Right cardiac atrium (tissue), 5 donors: ENCODE measurements at regions of chr7 and their contacts with region 1.

Region 1: DNA sequence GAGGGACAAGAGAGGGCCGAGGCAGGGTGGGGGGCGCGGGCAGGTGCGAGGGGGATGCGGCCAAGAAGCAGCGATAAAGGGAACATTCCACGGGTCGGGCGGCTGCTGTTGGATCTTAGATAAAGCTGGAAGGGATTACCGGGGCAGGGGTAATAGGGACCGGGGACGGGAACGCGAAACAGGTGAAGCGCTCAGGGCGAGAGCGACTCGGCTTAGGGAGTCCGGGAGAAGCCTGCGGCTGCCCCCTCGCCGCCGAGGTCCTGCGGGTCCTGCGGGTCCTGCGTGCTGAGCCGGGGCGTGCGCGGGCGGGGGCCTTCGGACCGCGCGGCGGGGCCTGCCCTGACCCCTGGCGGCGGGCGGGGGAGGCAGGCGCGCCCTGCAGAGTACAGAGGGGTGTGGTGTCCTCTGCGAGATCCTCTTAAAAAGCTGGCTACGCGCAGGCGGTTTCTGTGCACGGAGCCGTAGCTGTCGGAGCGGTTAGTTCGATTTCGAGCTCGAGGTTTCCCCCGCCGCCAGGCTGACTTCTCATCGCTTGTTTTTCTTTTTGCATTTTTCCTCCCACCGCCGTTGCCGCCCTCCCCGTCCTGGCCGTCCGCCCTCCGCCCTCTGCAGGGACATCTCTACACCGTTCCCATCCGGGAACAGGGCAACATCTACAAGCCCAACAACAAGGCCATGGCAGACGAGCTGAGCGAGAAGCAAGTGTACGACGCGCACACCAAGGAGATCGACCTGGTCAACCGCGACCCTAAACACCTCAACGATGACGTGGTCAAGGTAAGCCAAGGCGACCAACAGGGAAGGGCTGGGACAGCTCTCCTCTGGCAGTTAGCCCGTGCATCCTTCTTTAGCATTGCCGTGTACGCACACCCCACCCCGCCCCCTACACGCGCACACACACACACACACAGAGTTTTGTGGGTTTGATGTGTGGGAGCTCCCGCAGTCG is 1.4 kb downstream of the CAV1 start:
- DNase-seq: peak; percentile 84 to 94 (median 93)
- ATAC-seq: peak; percentile 89 to 91
- H3K4me3 ChIP-seq: peak overlapping the region; percentile 76
- H3K27ac ChIP-seq: peak overlapping the region; percentile 95
- H3K4me1 ChIP-seq: peaks cover 6% of the 10 kb centered on the region
- H3K27me3 ChIP-seq: no peaks in the 10 kb centered on the region

Region 2: DNA sequence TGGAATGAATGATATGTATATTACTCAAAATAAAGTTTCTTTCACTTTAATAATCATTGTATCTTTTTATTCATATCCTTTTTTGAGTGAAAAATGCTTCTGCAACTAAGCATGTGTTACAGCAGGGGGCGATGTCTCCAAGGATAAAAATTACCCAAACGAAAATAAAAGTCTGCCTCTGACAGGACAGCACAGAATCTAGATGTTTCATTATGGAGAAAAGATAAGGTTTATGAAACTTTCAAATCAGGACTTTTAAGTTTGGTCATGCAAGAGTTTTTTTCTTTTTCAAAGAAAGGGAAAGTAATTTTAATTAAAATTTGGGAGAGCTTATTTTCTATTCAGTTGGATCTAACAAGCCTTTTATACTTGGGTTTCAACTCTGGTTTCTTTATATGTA is 267.5 kb before region 1 on chr7:
- intact Hi-C with region 1: loop called in 2 of 4 experiments (anchors 5 to 10 kb)
- DNase-seq: no peak
- ATAC-seq: peak; percentile 54 to 59
- H3K4me3 ChIP-seq: no peak overlapping the region
- H3K27ac ChIP-seq: no peak overlapping the region
- H3K4me1 ChIP-seq: no peaks in the 10 kb centered on the region
- H3K27me3 ChIP-seq: no peaks in the 10 kb centered on the region

Region 3: DNA sequence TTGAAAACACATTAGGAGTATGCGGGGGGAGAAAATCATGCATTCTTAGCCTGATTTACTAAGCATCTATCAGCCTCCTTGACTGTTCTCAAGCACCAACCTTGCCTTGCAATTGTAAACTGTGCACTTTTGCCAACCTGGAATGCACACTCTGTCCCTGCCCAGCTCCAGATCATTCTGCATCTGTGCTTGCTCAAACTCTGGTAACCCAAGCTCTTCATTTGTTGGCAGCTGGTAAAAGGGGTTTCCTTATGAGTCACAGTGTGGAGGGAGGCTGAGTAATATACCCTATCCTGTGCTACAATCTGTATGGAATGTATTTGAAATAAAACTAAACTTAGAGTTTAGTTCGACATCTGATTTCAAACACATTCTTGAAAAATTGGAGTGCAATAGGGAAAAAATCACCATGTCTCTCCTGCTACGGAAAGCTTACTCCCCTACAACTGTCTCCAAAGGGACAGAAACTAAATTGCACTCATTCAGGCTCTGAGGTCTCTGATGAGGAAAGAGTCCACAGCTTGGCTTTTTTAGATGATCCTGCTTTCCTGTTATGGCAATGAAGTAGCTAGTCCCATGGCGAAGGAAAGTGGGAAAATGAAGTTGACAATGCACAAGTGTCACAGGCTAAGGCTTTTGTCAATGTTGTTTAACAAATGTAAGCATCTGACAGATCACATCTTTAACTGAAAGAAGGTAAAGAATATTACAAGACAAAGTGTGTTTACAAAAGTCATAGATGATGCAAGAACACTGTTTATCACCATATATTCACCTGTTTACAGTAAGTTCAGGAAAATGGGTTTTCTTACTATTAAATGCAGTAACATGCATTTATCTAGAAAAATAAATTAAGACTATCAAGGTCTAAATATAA is 254.0 kb before region 1 on chr7:
- intact Hi-C with region 1: loop called in 2 of 4 experiments (anchors 10 kb)
- DNase-seq: peak in 2 of 3 donors; percentile 19 to 40
- ATAC-seq: peak; percentile 92 to 97
- H3K4me3 ChIP-seq: no peak overlapping the region
- H3K27ac ChIP-seq: peak overlapping the region; percentile 56
- H3K4me1 ChIP-seq: peaks cover 3% of the 10 kb centered on the region
- H3K27me3 ChIP-seq: no peaks in the 10 kb centered on the region

Region 4: DNA sequence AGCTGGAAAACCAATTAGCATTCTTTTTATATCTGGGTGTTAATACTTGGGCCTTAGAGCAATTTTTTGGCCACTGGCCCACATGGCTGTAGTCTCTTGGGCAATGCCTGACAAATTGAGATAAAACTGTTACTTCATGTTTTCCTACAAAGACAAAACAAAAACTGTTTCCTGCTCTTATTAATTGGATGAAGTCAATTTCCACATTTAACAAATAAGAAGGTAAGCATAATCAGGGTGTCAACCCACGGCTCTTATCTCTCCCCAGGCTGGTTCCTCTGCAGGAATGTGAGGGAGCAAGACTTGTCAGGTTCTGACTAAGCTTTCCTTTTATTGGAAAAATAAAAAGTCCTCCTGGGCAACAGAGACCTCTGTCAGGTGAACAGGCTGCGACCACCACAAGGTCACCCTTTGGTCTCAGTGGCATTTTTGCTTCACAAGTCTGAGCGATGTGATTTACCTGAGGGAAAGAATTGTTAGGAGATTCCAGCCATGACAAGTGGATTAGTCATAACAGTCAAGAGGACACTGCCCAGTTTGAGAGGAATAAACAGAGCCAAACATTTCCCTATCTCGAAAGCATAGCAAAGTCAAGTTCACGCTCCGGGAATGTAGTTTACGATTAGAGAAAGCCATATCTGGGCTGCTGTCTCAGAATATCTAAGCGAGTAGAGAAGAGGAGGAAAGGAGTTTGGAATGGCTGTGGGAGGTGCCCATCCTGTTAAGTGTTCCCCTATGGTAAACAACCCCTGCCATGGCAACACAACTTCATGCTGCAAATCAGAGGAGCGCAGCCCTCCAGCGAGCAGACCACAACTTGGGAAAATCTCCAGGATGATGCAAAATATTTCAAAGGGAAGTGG is 171.4 kb before region 1 on chr7:
- intact Hi-C with region 1: loop called in 2 of 4 experiments (anchors 2 to 10 kb)
- DNase-seq: peak; percentile 81 to 91 (median 87)
- ATAC-seq: peak; percentile 91
- H3K4me3 ChIP-seq: peak overlapping the region; percentile 26
- H3K27ac ChIP-seq: peak overlapping the region; percentile 99
- H3K4me1 ChIP-seq: peaks cover 9% of the 10 kb centered on the region
- H3K27me3 ChIP-seq: no peaks in the 10 kb centered on the region

Region 5: DNA sequence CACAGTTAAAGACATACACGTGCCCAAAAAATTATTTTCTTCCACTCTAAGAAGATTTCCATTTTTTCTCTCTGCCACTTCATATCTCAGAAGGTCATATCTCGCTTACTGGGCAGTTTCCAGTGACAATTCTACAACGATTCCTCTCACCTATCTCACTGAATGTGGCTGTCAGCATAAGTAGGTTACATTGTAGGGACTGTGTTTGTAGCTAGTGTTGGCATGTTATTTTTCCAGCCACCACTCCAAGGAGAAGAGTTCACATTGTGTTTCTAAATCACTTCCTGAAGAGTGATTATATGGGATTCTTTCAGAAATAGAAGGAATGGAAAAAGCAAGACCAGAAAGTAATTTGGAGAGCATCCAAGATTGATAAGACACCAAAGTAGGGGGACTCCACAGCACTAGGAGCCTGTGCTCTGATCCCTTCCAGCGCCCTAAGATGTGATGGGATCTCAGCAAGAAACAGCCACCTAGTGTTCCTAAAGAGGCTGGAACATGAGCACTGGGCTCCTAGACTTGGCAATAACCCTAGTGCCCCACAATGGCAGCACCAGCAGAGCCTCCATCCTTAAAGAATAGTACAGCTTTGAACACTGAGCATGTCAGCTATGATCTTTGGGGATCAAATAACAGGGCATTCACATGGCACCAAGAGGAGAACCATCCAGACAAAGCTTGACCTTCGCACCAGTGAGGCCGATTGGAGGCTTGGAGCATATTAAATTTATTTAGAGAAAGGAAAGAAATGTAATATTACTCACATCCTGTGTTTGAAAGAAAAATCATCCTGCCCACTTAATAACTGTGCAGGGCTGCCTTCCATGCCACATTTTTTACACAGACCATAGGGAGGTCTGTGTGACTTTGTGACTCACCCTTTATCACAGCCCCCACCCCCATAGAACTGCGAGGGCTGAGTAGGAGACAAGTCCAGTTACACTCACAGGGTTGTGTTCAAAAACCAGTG is 50.4 kb after region 1 on chr7:
- intact Hi-C with region 1: loop called in 3 of 4 experiments (anchors 5 to 10 kb)
- DNase-seq: peak in 1 of 3 donors; percentile 35
- ATAC-seq: peak; percentile 58 to 79
- H3K4me3 ChIP-seq: no peak overlapping the region
- H3K27ac ChIP-seq: peak overlapping the region; percentile 19
- H3K4me1 ChIP-seq: peaks cover 12% of the 10 kb centered on the region
- H3K27me3 ChIP-seq: no peaks in the 10 kb centered on the region

Region 6: GRCh38 chr7:116582806-116583444 is 56.7 kb after region 1 on chr7:
- intact Hi-C with region 1: loop called in 3 of 4 experiments (anchors 5 to 10 kb)
- DNase-seq: peak; percentile 31 to 56 (median 51)
- ATAC-seq: peak; percentile 84 to 88
- H3K4me3 ChIP-seq: no peak overlapping the region
- H3K27ac ChIP-seq: peak overlapping the region; percentile 57
- H3K4me1 ChIP-seq: peaks cover 2% of the 10 kb centered on the region
- H3K27me3 ChIP-seq: no peaks in the 10 kb centered on the region